GM12878 (cell line): ENCODE measurements at regions of chr6 and their contacts with region 1.

Region 1: GRCh38 chr6:108558372-108559096 is 2.2 kb upstream of the FOXO3 start:
- DNase-seq: peak; percentile 81
- ATAC-seq: peak; percentile 71
- H3K4me3 ChIP-seq: peak overlapping the region; percentile 86
- H3K27ac ChIP-seq: peak overlapping the region; percentile 61; the same call in 1 of the 2 replicates
- H3K4me1 ChIP-seq: peaks cover 4% of the 10 kb centered on the region; the same call in 1 of the 2 replicates
- H3K27me3 ChIP-seq: peaks cover 6 to 8% of the 10 kb centered on the region in 2 experiments
- CTCF ChIP-seq: no peak
- EP300 ChIP-seq: peak in 1 of 2 experiments; percentile 21; a peak in 1 of 4 replicates
- POLR2A ChIP-seq: peak; percentile 46; the same call in 1 of the 2 replicates
- RAD21 ChIP-seq: no peak

Region 2: GRCh38 chr6:108510461-108511319 is 47.8 kb before region 1 on chr6:
- CTCF ChIA-PET with region 1: no interaction called
- POLR2A ChIA-PET with region 1: no interaction called
- RAD21 ChIA-PET with region 1: no interaction called
- SMC1A ChIA-PET with region 1: no interaction called
- in situ Hi-C with region 1: no loop called
- intact Hi-C with region 1: no loop called
- DNase-seq: no peak
- ATAC-seq: no peak
- H3K4me3 ChIP-seq: no peak overlapping the region
- H3K27ac ChIP-seq: no peak overlapping the region
- H3K4me1 ChIP-seq: no peaks in the 10 kb centered on the region
- H3K27me3 ChIP-seq: no peaks in the 10 kb centered on the region
- CTCF ChIP-seq: no peak
- EP300 ChIP-seq: no peak
- POLR2A ChIP-seq: no peak
- RAD21 ChIP-seq: no peak

Region 3: DNA sequence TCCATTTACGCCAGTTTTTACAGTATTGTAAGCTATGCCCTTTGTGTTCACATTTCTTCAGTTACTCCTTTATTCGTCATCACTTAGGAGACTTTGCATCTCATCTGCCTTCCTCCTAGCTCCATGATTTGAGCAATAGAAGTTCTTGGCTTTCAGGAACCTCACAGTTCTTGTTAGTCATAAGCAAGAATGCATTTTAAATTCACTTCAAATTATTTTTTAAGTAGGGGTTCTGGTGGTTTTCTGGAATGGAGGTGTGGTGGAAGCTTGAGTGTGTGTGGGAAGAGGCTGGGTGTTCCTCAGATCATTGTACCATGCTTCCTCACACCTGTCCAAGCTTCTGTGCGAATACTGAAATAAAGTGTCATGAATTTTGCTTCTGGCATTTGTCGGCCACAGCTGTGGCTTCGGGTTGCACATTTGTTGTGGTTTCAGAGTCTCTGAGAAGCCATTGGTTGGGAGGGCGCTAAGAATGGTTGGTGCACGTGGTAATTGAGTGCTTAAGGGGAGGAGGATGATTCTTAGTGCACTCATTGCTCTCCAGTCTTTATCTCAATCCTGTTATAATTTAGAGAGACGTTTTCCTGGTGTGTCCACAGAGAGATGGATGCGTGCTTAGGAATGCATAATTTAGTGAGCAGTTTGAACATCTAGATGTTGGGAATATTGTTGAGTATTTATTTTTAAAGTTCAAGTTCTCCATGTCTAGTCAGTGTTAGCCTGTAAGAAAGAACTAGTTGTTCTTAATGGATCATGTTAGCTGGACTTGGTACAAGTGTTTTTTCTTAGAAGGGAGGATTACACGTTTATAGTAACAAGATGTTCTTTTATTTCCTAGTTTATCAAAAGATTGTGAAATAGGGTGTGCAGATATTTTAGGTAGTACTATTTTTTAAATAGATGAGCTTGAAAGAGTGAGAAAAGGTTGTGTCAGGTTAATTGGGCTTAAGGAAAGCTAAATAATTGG is 34.1 kb after region 1 on chr6:
- CTCF ChIA-PET with region 1: interaction called, 3 read pairs
- POLR2A ChIA-PET with region 1: no interaction called
- RAD21 ChIA-PET with region 1: interaction called, 11 read pairs
- SMC1A ChIA-PET with region 1: interaction called, 9 read pairs
- in situ Hi-C with region 1: no loop called
- intact Hi-C with region 1: no loop called
- DNase-seq: peak; percentile 76
- ATAC-seq: peak; percentile 85
- H3K4me3 ChIP-seq: no peak overlapping the region
- H3K27ac ChIP-seq: peak overlapping the region; percentile 77
- H3K4me1 ChIP-seq: peaks cover 56% of the 10 kb centered on the region
- H3K27me3 ChIP-seq: no peaks in the 10 kb centered on the region; a peak in 1 of 4 replicates
- CTCF ChIP-seq: no peak
- EP300 ChIP-seq: peak; percentile 71; a peak in 3 of 4 replicates
- POLR2A ChIP-seq: no peak
- RAD21 ChIP-seq: no peak

Region 4: GRCh38 chr6:108635505-108636226 is 77.1 kb after region 1 on chr6:
- CTCF ChIA-PET with region 1: no interaction called
- POLR2A ChIA-PET with region 1: no interaction called
- RAD21 ChIA-PET with region 1: no interaction called
- SMC1A ChIA-PET with region 1: no interaction called
- in situ Hi-C with region 1: no loop called
- intact Hi-C with region 1: loop called (anchors 5 kb)
- DNase-seq: no peak
- ATAC-seq: peak; percentile 60
- H3K4me3 ChIP-seq: no peak overlapping the region
- H3K27ac ChIP-seq: no peak overlapping the region
- H3K4me1 ChIP-seq: peaks cover 13% of the 10 kb centered on the region; the same call in 1 of the 2 replicates
- H3K27me3 ChIP-seq: no peaks in the 10 kb centered on the region
- CTCF ChIP-seq: no peak
- EP300 ChIP-seq: no peak
- POLR2A ChIP-seq: no peak
- RAD21 ChIP-seq: no peak